Posterior cingulate gyrus (tissue), 11 donors: ENCODE measurements at regions of chr17 and their contacts with region 1.

Region 1: DNA sequence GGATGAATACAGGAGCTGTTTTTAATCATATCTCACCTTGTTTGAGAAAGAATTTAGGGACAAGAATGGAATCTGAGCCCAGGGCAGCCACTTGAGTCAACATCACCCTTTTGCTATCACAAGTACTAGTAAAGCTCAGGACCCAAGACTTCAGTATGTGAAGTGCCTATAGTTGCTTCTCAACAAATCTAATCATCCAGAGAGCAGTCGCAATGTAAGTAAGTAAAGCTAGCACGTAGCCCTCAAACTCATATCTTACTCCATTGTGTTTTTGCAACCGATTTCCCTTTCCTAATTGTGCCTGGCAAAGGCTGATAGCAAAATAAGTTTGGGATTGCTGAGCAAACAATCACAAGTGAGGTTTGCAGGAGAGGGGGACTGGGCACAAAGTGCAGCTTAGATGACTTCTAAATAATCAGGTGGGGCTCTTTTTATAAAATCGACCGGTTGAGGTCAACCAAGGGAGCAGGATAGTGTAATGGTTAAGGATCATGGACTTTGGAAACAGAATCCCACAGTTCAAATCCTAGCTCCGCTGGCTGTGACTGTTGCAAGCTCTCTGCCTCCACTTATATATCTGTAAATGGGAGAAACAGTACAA is 13.0 kb downstream of the TOB1 start:
- DNase-seq: no peak

Region 2: DNA sequence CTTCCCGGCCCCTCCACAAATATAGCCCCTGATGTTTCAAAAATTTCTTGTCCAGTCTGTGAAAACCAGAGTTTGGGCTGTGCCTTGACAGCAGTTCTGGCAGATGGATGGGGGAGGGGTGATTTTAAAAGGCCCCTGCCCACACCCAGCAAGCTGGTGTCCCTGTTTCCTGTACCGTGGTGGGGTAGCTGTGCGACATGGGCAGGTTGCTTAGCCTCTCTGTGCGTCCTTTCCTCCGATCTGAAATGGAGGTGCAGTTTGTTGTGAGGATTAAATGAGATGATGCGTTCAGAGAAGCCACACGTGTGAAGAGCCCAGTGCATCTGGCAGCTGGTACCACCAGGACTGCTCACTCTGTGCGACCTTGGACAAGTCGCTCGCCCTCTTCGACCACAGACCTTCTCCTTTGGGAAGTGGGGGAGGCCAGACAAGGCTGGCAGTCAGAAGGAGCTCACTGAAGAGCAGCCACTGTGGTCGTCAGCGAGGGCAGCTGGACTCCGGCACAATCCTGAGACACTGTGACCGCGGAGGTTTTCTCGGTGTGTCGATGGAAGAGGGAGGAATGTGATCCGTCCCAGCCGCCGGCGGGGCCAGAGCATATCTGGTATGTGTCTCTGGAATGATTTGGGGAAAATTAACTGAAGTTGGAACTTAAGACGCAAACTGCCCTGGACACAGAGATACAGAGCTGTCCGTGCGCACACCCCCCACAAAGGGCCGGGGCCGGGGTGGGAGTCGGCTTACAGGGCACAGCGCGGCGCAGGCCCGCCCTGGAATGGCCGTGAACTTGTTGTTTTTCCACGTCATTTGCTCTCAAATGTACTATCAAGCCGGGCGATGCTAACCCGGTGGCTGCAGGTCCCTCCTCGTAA is 18.4 kb before region 1 on chr17:
- intact Hi-C with region 1: no loop called
- DNase-seq: peak in 2 of 10 donors; percentile 68 to 74

Region 3: GRCh38 chr17:50949989-50950881 is 97.1 kb after region 1 on chr17:
- intact Hi-C with region 1: loop called (anchors 1 kb)
- DNase-seq: peak; percentile 65 to 97 (median 79)